Activated naive CD4-positive, alpha-beta T cell treated with anti-CD3 and anti-CD28 coated beads for 36 hours (primary cell): ENCODE measurements at regions of chr1 and their contacts with region 1.

Region 1: DNA sequence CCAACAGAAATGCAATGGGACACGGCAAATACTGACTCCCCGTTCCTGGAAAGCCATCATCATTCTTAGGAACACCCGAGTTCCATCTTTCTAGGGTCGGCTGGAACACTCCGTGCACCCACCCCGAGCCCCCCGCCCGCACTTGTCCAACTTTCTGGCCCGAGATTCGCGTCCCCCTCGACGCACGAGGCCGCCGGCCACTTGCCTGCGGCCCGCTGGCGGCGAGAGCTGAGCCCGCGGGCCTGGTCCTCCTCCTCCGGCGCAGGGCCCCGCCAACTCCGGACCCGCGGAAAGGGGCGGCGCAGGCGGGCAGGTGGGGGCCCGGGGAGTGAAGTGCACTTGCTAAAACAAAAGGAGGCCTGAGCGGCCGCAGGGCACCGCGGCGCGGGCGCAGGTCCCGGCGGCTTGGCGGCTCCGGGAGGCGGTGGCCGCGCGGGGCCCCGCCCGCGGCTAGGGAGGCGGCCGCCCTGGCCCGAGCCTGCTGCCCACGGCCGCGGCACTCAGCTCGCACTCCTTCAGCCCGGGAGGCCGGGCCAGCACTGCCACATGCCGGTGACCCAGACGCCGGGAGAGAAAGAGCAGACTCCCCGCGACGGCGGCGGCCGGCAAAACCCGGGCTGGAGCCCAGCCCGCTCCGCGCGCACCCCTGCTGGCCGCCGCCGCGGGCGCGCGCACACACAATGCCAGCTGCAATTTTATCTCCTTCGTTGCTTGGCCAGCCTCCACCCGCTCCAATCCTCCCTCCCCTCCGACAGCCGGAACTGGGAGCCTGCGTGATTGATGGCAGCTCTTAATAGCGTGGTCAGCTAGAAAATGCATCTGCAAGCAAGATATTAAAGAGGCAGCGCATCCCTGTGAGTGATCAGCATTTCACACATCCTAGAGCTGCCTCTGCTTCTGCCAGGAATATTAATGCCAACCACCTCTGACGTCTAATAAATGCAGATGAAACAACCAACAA is 114.3 kb downstream of the RERE start:
- DNase-seq: peak; percentile 72
- H3K4me3 Mint-ChIP-seq: peak overlapping the region; percentile 84
- H3K27ac Mint-ChIP-seq: no peak overlapping the region
- H3K4me1 Mint-ChIP-seq: peaks cover 31% of the 10 kb centered on the region
- H3K27me3 Mint-ChIP-seq: peaks cover 36% of the 10 kb centered on the region

Region 2: GRCh38 chr1:8154621-8155052 is 548.5 kb before region 1 on chr1:
- CTCF ChIA-PET with region 1: no interaction called
- intact Hi-C with region 1: loop called (anchors 2 kb)
- DNase-seq: no peak
- H3K4me3 Mint-ChIP-seq: no peak overlapping the region
- H3K27ac Mint-ChIP-seq: no peak overlapping the region
- H3K4me1 Mint-ChIP-seq: peaks cover 42% of the 10 kb centered on the region
- H3K27me3 Mint-ChIP-seq: peaks cover 7% of the 10 kb centered on the region

Region 3: GRCh38 chr1:8525558-8526275 is 177.4 kb before region 1 on chr1:
- CTCF ChIA-PET with region 1: no interaction called
- intact Hi-C with region 1: loop called (anchors 1 kb)
- DNase-seq: peak; percentile 86
- H3K4me3 Mint-ChIP-seq: no peak overlapping the region
- H3K27ac Mint-ChIP-seq: no peak overlapping the region
- H3K4me1 Mint-ChIP-seq: peaks cover 26% of the 10 kb centered on the region
- H3K27me3 Mint-ChIP-seq: no peaks in the 10 kb centered on the region

Region 4: GRCh38 chr1:8629241-8630091 is 73.7 kb before region 1 on chr1:
- CTCF ChIA-PET with region 1: no interaction called
- intact Hi-C with region 1: no loop called
- DNase-seq: peak; percentile 37
- H3K4me3 Mint-ChIP-seq: no peak overlapping the region
- H3K27ac Mint-ChIP-seq: no peak overlapping the region
- H3K4me1 Mint-ChIP-seq: peaks cover 58% of the 10 kb centered on the region
- H3K27me3 Mint-ChIP-seq: no peaks in the 10 kb centered on the region

Region 5: GRCh38 chr1:8671306-8671917 is 31.7 kb before region 1 on chr1:
- CTCF ChIA-PET with region 1: interaction called, 4 read pairs
- intact Hi-C with region 1: loop called (anchors 2 kb)
- DNase-seq: peak; percentile 43
- H3K4me3 Mint-ChIP-seq: no peak overlapping the region
- H3K27ac Mint-ChIP-seq: no peak overlapping the region
- H3K4me1 Mint-ChIP-seq: peaks cover 52% of the 10 kb centered on the region
- H3K27me3 Mint-ChIP-seq: no peaks in the 10 kb centered on the region

Region 6: DNA sequence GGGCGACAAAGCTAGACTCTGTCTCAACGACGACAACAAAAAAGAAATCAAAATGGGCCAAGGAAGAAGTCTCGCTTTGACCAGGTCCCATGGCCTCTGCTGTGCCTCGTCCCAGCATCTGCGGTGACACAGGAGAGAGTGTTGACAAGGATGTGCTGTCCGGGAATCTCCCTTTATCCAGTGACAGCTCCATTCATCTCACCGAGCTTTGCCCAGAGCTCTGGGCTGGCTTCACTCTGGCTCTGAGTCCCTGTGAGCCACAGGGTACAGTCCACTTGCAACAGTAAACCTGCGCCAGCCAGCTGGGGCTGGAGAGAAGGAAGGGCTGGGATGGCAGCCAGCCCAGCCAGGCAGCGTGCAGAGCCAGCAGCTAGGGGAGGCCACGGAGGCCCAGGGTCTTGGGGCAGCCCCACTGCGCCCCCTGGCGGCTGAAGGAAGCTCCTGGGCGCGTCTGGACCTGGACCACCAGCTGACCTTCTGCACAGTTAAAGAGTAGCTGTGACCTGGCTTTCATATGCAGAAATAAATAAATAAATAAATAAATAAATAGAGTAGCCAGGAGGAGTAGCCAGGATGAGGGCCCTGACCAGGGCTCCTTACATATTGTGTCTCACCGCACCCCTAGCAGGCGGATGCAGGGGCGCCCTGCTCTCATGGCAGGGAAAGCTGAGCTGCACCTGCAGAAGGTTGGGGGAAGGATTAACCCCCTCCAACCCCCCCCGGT is 145.7 kb after region 1 on chr1:
- CTCF ChIA-PET with region 1: interaction called, 11 read pairs
- intact Hi-C with region 1: no loop called
- DNase-seq: peak; percentile 82
- H3K4me3 Mint-ChIP-seq: no peak overlapping the region
- H3K27ac Mint-ChIP-seq: no peak overlapping the region
- H3K4me1 Mint-ChIP-seq: peaks cover 4% of the 10 kb centered on the region
- H3K27me3 Mint-ChIP-seq: no peaks in the 10 kb centered on the region

Region 7: GRCh38 chr1:9145021-9145668 is 442.0 kb after region 1 on chr1:
- CTCF ChIA-PET with region 1: no interaction called
- intact Hi-C with region 1: no loop called
- DNase-seq: no peak
- H3K4me3 Mint-ChIP-seq: no peak overlapping the region
- H3K27ac Mint-ChIP-seq: no peak overlapping the region
- H3K4me1 Mint-ChIP-seq: no peaks in the 10 kb centered on the region
- H3K27me3 Mint-ChIP-seq: no peaks in the 10 kb centered on the region

Region 8: GRCh38 chr1:9476790-9477463 is 773.8 kb after region 1 on chr1:
- CTCF ChIA-PET with region 1: no interaction called
- intact Hi-C with region 1: no loop called
- DNase-seq: no peak
- H3K4me3 Mint-ChIP-seq: no peak overlapping the region
- H3K27ac Mint-ChIP-seq: no peak overlapping the region
- H3K4me1 Mint-ChIP-seq: no peaks in the 10 kb centered on the region
- H3K27me3 Mint-ChIP-seq: no peaks in the 10 kb centered on the region